Sciatic nerve (tissue), 2 donors: ENCODE measurements at regions of chr7 and their contacts with region 1.

Region 1: GRCh38 chr7:6505685-6506574 is 45.3 kb downstream of the GRID2IP start:
- DNase-seq: no peak
- ATAC-seq: no peak

Region 2: DNA sequence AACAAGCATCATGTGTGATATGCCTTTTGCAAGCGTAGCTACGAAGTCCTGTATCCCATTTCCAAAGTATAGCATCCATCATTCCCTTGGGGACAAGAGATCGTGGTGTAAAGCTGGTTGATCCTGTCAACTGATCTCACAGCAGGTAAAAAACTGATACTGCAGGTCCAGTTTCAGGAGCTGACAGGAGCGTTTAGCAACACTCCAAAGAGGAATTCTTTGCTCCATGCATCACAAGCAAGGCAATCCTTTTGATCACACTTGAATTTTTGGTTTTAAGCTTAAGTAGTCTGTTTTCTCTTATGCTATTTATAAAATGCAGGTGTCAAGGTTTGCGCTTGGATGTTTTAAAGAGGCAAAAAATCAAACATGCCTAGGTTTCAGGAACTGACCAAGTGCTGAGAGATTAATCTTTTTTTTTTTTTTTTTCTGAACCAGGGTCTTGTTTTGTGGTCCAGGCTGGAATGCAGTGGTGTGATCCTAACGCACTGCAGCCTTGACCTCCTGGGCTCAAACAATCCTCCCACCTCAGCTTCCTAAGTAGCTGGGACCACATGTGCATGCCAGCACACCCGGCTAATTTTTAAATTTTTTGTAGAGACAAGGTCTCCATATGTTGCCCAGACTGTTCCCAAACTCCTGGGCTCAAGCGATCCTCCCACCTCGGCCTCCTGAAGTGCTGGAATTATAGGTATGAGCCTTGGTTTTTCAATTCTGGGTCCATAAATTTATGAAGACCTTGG is 69.5 kb after region 1 on chr7:
- intact Hi-C with region 1: loop called (anchors 2 kb)
- DNase-seq: no peak
- ATAC-seq: no peak